HCT116 (cell line): ENCODE measurements at regions of chr15 and their contacts with region 1.

Region 1: GRCh38 chr15:43204016-43204901 is 16.6 kb downstream of the EPB42 start:
- DNase-seq: peak; percentile 36
- ATAC-seq: peak; percentile 87
- H3K4me3 ChIP-seq: no peak overlapping the region
- H3K27ac ChIP-seq: no peak overlapping the region
- H3K4me1 ChIP-seq: peaks cover 0 to 4% of the 10 kb centered on the region in 2 experiments; a peak in 1 of 4 replicates
- H3K27me3 ChIP-seq: no peaks in the 10 kb centered on the region
- CTCF ChIP-seq: peak; percentile 60 to 83 (median 82); a peak in 5 of 6 replicates
- POLR2A ChIP-seq: no peak
- RAD21 ChIP-seq: peak; percentile 60

Region 2: GRCh38 chr15:42704492-42704926 is 499.8 kb before region 1 on chr15:
- CTCF ChIA-PET with region 1: interaction called, 23 read pairs
- POLR2A ChIA-PET with region 1: no interaction called
- RAD21 ChIA-PET with region 1: no interaction called
- intact Hi-C with region 1: loop called (anchors 1 kb)
- DNase-seq: peak; percentile 47
- ATAC-seq: peak; percentile 100
- H3K4me3 ChIP-seq: no peak overlapping the region
- H3K27ac ChIP-seq: no peak overlapping the region
- H3K4me1 ChIP-seq: 0 out of 4 replicates have a peak, but pooled peaks cover 0 to 3% of the 10 kb centered on the region in 2 experiments
- H3K27me3 ChIP-seq: no peaks in the 10 kb centered on the region
- CTCF ChIP-seq: peak; percentile 56 to 92 (median 91); a peak in 5 of 6 replicates
- POLR2A ChIP-seq: no peak
- RAD21 ChIP-seq: peak; percentile 83

Region 3: GRCh38 chr15:42736793-42737528 is 467.3 kb before region 1 on chr15 and contains the start of gene CDAN1:
- CTCF ChIA-PET with region 1: interaction called, 27 read pairs
- POLR2A ChIA-PET with region 1: no interaction called
- RAD21 ChIA-PET with region 1: no interaction called
- intact Hi-C with region 1: loop called (anchors 1 kb)
- DNase-seq: peak; percentile 38
- ATAC-seq: peak; percentile 93
- H3K4me3 ChIP-seq: peak within 1 kb of the TSS; percentile 69 to 85
- H3K27ac ChIP-seq: peak within 1 kb of the TSS; percentile 88
- H3K4me1 ChIP-seq: peaks cover 12 to 16% of the 10 kb centered on the region in 2 experiments; a peak in 3 of 4 replicates
- H3K27me3 ChIP-seq: no peaks in the 10 kb centered on the region
- CTCF ChIP-seq: no peak
- POLR2A ChIP-seq: peak; percentile 69
- RAD21 ChIP-seq: no peak
- total RNA-seq, gene CDAN1: 22.4 TPM

Region 4: GRCh38 chr15:43185157-43186017 is 18.9 kb before region 1 on chr15 and contains the start of gene CCNDBP1:
- CTCF ChIA-PET with region 1: interaction called, 14 read pairs
- POLR2A ChIA-PET with region 1: no interaction called
- RAD21 ChIA-PET with region 1: no interaction called
- intact Hi-C with region 1: loop called (anchors 1 kb)
- DNase-seq: peak; percentile 84
- ATAC-seq: peak; percentile 98
- H3K4me3 ChIP-seq: peak within 1 kb of the TSS; percentile 75 to 82
- H3K27ac ChIP-seq: peak within 1 kb of the TSS; percentile 54
- H3K4me1 ChIP-seq: peaks cover 10 to 19% of the 10 kb centered on the region in 2 experiments
- H3K27me3 ChIP-seq: no peaks in the 10 kb centered on the region
- CTCF ChIP-seq: peak in 2 of 3 experiments; percentile 46 to 49; a peak in 4 of 6 replicates
- POLR2A ChIP-seq: peak; percentile 53
- RAD21 ChIP-seq: peak; percentile 7; the same call in 1 of the 2 replicates
- total RNA-seq, gene CCNDBP1: 39.8 TPM

Region 5: GRCh38 chr15:43214592-43215295 is 10.5 kb after region 1 on chr15:
- CTCF ChIA-PET with region 1: interaction called, 16 read pairs
- POLR2A ChIA-PET with region 1: no interaction called
- RAD21 ChIA-PET with region 1: no interaction called
- intact Hi-C with region 1: no loop called
- DNase-seq: no peak
- ATAC-seq: no peak
- H3K4me3 ChIP-seq: no peak overlapping the region
- H3K27ac ChIP-seq: no peak overlapping the region
- H3K4me1 ChIP-seq: peaks cover 0 to 3% of the 10 kb centered on the region in 2 experiments; a peak in 1 of 4 replicates
- H3K27me3 ChIP-seq: no peaks in the 10 kb centered on the region
- CTCF ChIP-seq: no peak
- POLR2A ChIP-seq: no peak
- RAD21 ChIP-seq: no peak

Region 6: GRCh38 chr15:43225201-43225949 is 21.1 kb after region 1 on chr15:
- CTCF ChIA-PET with region 1: interaction called, 31 read pairs
- POLR2A ChIA-PET with region 1: no interaction called
- RAD21 ChIA-PET with region 1: no interaction called
- intact Hi-C with region 1: no loop called
- DNase-seq: peak; percentile 56
- ATAC-seq: peak; percentile 99
- H3K4me3 ChIP-seq: no peak overlapping the region
- H3K27ac ChIP-seq: no peak overlapping the region
- H3K4me1 ChIP-seq: no peaks in the 10 kb centered on the region
- H3K27me3 ChIP-seq: no peaks in the 10 kb centered on the region
- CTCF ChIP-seq: peak; percentile 75 to 85 (median 83)
- POLR2A ChIP-seq: no peak
- RAD21 ChIP-seq: peak; percentile 81

Region 7: GRCh38 chr15:43285609-43286037 is 81.4 kb after region 1 on chr15:
- CTCF ChIA-PET with region 1: interaction called, 13 read pairs
- POLR2A ChIA-PET with region 1: no interaction called
- RAD21 ChIA-PET with region 1: interaction called in 1 of 2 experiments, 3 read pairs
- intact Hi-C with region 1: no loop called
- DNase-seq: peak; percentile 56
- ATAC-seq: peak; percentile 89
- H3K4me3 ChIP-seq: no peak overlapping the region
- H3K27ac ChIP-seq: no peak overlapping the region
- H3K4me1 ChIP-seq: no peaks in the 10 kb centered on the region
- H3K27me3 ChIP-seq: peaks cover 9% of the 10 kb centered on the region; the same call in 1 of the 2 replicates
- CTCF ChIP-seq: peak; percentile 73 to 89 (median 79); a peak in 5 of 6 replicates
- POLR2A ChIP-seq: no peak
- RAD21 ChIP-seq: peak; percentile 87

Region 8: DNA sequence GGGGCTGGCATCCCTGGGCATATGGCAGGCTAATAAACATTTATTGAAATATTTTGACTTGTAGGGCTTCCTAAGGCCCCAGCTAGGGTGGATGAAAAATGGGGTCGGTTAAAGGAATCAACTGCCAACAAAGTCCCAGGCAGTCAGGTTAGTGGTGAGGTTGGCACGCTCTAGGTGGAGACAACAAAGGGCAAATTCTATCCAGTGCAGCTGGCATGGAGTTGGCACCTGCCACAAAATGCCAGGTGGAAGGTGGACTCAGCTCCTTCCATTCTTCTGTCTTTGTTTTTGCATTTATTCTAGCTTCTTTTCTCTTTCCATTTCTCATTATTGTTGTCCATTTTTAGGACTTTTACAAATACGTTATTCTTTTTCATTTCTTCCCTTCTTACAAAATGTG is 95.2 kb after region 1 on chr15:
- CTCF ChIA-PET with region 1: no interaction called
- POLR2A ChIA-PET with region 1: no interaction called
- RAD21 ChIA-PET with region 1: no interaction called
- intact Hi-C with region 1: no loop called
- DNase-seq: no peak
- ATAC-seq: no peak
- H3K4me3 ChIP-seq: no peak overlapping the region
- H3K27ac ChIP-seq: no peak overlapping the region
- H3K4me1 ChIP-seq: peaks cover 0 to 3% of the 10 kb centered on the region in 2 experiments; a peak in 2 of 4 replicates
- H3K27me3 ChIP-seq: no peaks in the 10 kb centered on the region
- CTCF ChIP-seq: no peak
- POLR2A ChIP-seq: no peak
- RAD21 ChIP-seq: no peak